Left ventricle myocardium superior (tissue), 1 donor: ENCODE measurements at regions of chr2 and their contacts with region 1.

Region 1: DNA sequence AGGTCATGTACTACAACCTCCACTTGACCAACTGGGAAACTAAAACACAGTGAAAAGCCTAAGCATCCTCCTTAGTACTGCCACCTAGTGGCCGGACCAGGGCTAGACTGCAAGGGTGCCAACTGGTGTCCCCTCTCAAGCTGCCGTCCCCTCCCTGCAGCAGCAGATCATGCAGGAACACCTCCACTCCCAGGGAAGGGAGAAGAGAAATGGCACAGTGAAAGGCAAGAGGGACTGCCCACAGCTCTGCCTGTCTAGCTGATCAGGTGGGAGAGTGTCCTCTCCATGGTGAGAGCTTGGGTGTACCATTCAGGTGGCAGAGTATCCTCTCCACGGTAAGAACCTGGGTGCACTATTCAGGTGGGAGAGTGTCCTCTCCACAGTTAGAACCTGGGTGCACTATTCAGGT is 78.1 kb downstream of the AAK1 start:
- DNase-seq: peak; percentile 57
- ATAC-seq: peak; percentile 42

Region 2: DNA sequence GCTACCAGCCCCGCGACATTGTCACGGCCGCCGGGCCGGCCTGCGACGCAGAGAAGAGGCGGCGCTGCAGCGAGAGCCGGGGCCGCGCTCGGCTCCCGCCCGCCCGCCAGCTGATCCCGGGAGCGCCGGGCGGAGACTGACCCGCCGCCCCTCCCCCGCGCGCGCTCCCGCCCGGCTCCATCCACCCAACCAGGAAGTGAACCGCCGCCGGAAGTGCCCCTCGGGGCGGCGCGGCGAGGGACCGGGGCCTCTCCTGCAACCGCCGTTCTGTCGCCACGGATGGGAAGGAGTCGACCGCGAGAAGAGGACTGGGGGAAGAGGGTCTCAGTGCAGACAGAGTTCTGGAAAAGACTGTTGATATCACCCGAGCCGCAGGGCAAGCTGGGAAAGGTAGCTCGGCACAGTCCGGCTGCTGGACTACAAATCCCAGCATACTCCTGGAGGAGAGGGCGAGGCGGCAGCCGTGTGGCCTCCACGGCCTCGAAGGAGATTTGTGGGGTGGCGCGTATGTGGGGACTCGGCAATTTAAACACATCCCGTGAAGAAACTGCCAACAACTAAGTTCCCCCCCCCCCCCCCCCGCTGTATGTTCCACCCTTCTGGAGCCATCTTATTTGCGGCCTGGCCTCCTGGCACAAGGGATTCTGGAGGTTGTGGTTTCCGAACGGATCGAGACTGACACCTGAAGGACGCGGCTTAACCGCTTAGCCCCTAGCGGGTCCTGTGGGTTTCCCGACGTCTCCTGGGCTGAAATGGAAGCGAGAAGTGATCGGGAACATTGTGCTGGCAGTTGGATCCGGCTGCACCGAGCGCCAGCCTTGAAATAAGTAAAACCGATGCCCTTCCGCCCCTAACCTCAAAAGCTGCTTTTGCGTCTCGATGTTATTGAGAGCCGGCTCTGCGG is 78.4 kb after region 1 on chr2 and contains the start of gene AAK1:
- intact Hi-C with region 1: loop called (anchors 10 kb)
- DNase-seq: peak; percentile 95
- ATAC-seq: peak; percentile 94
- total RNA-seq, gene AAK1: 91.1 TPM

Region 3: DNA sequence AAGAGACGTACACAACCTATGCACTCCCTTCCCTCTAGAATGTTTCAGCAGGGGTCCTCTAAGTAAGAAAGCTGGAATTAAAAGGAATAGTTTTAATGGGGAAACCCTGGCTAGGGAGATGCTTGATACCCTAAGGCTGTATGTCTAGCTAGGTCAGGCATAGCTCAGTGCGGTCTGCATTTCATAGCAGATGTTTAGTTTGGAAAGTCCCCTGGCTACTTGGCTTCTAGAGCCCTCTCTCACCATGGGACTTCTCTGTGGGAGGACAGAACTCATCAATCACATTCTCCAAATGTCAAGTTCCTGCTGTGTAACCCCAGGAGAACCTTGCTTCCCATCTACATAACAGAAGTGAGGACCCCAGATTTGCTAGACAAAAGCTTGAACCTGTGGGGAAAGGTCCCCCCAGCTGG is 152.4 kb after region 1 on chr2:
- intact Hi-C with region 1: loop called (anchors 10 kb)
- DNase-seq: no peak
- ATAC-seq: no peak